HCT116 (cell line): ENCODE measurements at regions of chr14 and their contacts with region 1.

Region 1: GRCh38 chr14:61296719-61297502 is 15.8 kb upstream of the TMEM30B start:
- DNase-seq: peak; percentile 27
- ATAC-seq: peak; percentile 67
- H3K4me3 ChIP-seq: no peak overlapping the region
- H3K27ac ChIP-seq: no peak overlapping the region
- H3K4me1 ChIP-seq: no peaks in the 10 kb centered on the region
- H3K27me3 ChIP-seq: no peaks in the 10 kb centered on the region
- CTCF ChIP-seq: peak; percentile 64 to 73 (median 68); a peak in 5 of 6 replicates
- POLR2A ChIP-seq: no peak
- RAD21 ChIP-seq: peak; percentile 82

Region 2: GRCh38 chr14:61438860-61439684 is 142.2 kb after region 1 on chr14:
- CTCF ChIA-PET with region 1: interaction called, 3 read pairs
- POLR2A ChIA-PET with region 1: no interaction called
- RAD21 ChIA-PET with region 1: no interaction called
- intact Hi-C with region 1: loop called (anchors 5 kb)
- DNase-seq: no peak
- ATAC-seq: peak; percentile 89
- H3K4me3 ChIP-seq: peak overlapping the region; percentile 2 to 42
- H3K27ac ChIP-seq: peak overlapping the region; percentile 56
- H3K4me1 ChIP-seq: peaks cover 26% of the 10 kb centered on the region in 2 experiments
- H3K27me3 ChIP-seq: no peaks in the 10 kb centered on the region
- CTCF ChIP-seq: no peak
- POLR2A ChIP-seq: no peak
- RAD21 ChIP-seq: no peak

Region 3: DNA sequence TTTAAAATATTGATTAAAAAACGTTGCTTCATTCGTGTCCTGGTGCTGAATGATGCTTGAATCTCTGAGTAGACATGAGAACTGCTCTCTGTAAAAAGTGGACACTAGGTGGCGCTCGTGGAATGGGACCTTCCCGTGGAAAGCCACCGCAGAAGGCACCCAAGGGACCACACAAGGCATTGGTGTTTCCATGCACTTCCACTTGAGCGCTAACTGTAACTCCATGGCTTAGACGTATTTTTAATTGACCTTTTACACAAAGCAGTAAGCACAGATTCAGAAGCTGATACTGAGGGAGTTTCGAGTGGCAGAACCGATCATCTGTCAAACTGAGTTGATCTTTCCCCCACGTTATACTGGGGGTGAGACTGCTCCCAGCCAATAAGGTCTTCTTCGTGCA is 159.8 kb after region 1 on chr14:
- CTCF ChIA-PET with region 1: no interaction called
- POLR2A ChIA-PET with region 1: no interaction called
- RAD21 ChIA-PET with region 1: no interaction called
- intact Hi-C with region 1: loop called (anchors 1 kb)
- DNase-seq: peak; percentile 44
- ATAC-seq: peak; percentile 93
- H3K4me3 ChIP-seq: no peak overlapping the region
- H3K27ac ChIP-seq: no peak overlapping the region
- H3K4me1 ChIP-seq: peaks cover 0 to 7% of the 10 kb centered on the region in 2 experiments; a peak in 2 of 4 replicates
- H3K27me3 ChIP-seq: no peaks in the 10 kb centered on the region
- CTCF ChIP-seq: peak; percentile 57 to 83 (median 83); a peak in 5 of 6 replicates
- POLR2A ChIP-seq: no peak
- RAD21 ChIP-seq: peak; percentile 75

Region 4: GRCh38 chr14:61537563-61538463 is 240.9 kb after region 1 on chr14:
- CTCF ChIA-PET with region 1: no interaction called
- POLR2A ChIA-PET with region 1: no interaction called
- RAD21 ChIA-PET with region 1: no interaction called
- intact Hi-C with region 1: no loop called
- DNase-seq: peak; percentile 95
- ATAC-seq: peak; percentile 86
- H3K4me3 ChIP-seq: peak overlapping the region in 1 of 2 experiments; percentile 12; a peak in 3 of 4 replicates
- H3K27ac ChIP-seq: peak overlapping the region; percentile 90
- H3K4me1 ChIP-seq: peaks cover 61 to 65% of the 10 kb centered on the region in 2 experiments
- H3K27me3 ChIP-seq: no peaks in the 10 kb centered on the region
- CTCF ChIP-seq: no peak
- POLR2A ChIP-seq: no peak
- RAD21 ChIP-seq: peak; percentile 45